GM12878 (cell line): ENCODE measurements at regions of chr10 and their contacts with region 1.

Region 1: GRCh38 chr10:102268375-102268888 is 23.1 kb downstream of the GBF1 start:
- DNase-seq: no peak
- ATAC-seq: peak; percentile 56; the same call in 1 of the 3 replicates
- H3K4me3 ChIP-seq: no peak overlapping the region
- H3K27ac ChIP-seq: no peak overlapping the region
- H3K4me1 ChIP-seq: no peaks in the 10 kb centered on the region
- H3K27me3 ChIP-seq: no peaks in the 10 kb centered on the region
- CTCF ChIP-seq: 0 out of 6 replicates have a peak, but pooled peaks of 1 of the 3 experiments have one; percentile 11
- EP300 ChIP-seq: no peak
- POLR2A ChIP-seq: no peak
- RAD21 ChIP-seq: no peak

Region 2: GRCh38 chr10:102254426-102254825 is 14.0 kb before region 1 on chr10:
- CTCF ChIA-PET with region 1: interaction called, 7 read pairs
- POLR2A ChIA-PET with region 1: interaction called, 5 read pairs
- RAD21 ChIA-PET with region 1: no interaction called
- SMC1A ChIA-PET with region 1: interaction called, 18 read pairs
- in situ Hi-C with region 1: no loop called
- intact Hi-C with region 1: no loop called
- DNase-seq: no peak
- ATAC-seq: no peak
- H3K4me3 ChIP-seq: no peak overlapping the region
- H3K27ac ChIP-seq: no peak overlapping the region
- H3K4me1 ChIP-seq: 0 out of 2 replicates have a peak, but pooled peaks cover 4% of the 10 kb centered on the region
- H3K27me3 ChIP-seq: no peaks in the 10 kb centered on the region
- CTCF ChIP-seq: no peak
- EP300 ChIP-seq: no peak
- POLR2A ChIP-seq: no peak
- RAD21 ChIP-seq: no peak

Region 3: GRCh38 chr10:102280397-102281101 is 12.1 kb after region 1 on chr10:
- CTCF ChIA-PET with region 1: interaction called, 7 read pairs
- POLR2A ChIA-PET with region 1: interaction called, 3 read pairs
- RAD21 ChIA-PET with region 1: interaction called, 3 read pairs
- SMC1A ChIA-PET with region 1: interaction called, 10 read pairs
- in situ Hi-C with region 1: no loop called
- intact Hi-C with region 1: no loop called
- DNase-seq: no peak
- ATAC-seq: peak; percentile 44
- H3K4me3 ChIP-seq: peak overlapping the region; percentile 14; the same call in 1 of the 2 replicates
- H3K27ac ChIP-seq: peak overlapping the region; percentile 44
- H3K4me1 ChIP-seq: peaks cover 6% of the 10 kb centered on the region; the same call in 1 of the 2 replicates
- H3K27me3 ChIP-seq: no peaks in the 10 kb centered on the region
- CTCF ChIP-seq: no peak
- EP300 ChIP-seq: no peak
- POLR2A ChIP-seq: no peak
- RAD21 ChIP-seq: no peak